Activated naive CD4-positive, alpha-beta T cell treated with anti-CD3 and anti-CD28 coated beads for 36 hours (primary cell): ENCODE measurements at regions of chr12 and their contacts with region 1.

Region 1: DNA sequence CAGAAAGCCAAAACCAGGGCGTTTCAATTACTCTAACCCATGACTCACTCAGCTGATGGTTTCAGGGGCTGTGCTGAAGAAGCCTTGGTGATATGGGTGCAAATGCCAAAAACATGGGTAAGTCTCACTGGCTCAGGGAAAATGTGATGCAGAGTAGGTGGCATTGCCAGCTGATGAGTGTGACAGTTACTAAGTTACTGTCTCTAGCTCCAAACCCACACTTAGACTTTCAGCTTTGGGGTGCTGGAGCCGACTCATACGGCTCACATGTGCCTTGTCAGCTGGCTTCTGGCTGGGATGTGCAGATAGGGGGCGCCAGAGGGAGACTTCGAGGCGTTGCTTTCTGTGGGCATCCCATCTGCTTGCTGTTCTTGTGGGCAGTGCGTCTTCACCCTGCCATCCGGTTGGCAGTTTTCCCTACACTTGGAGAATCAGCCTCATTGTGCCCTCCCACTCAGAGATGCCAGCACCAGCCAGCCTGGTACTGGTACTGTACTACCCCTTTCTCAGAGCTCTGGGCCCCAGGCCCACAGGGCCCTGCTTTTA is 11.1 kb upstream of the KRT7 start:
- DNase-seq: peak; percentile 96
- H3K4me3 Mint-ChIP-seq: no peak overlapping the region
- H3K27ac Mint-ChIP-seq: peak overlapping the region; percentile 14
- H3K4me1 Mint-ChIP-seq: peaks cover 22% of the 10 kb centered on the region
- H3K27me3 Mint-ChIP-seq: peaks cover 25% of the 10 kb centered on the region

Region 2: GRCh38 chr12:50734409-50735263 is 1487.3 kb before region 1 on chr12:
- CTCF ChIA-PET with region 1: no interaction called
- intact Hi-C with region 1: no loop called
- DNase-seq: peak; percentile 30
- H3K4me3 Mint-ChIP-seq: no peak overlapping the region
- H3K27ac Mint-ChIP-seq: no peak overlapping the region
- H3K4me1 Mint-ChIP-seq: no peaks in the 10 kb centered on the region
- H3K27me3 Mint-ChIP-seq: no peaks in the 10 kb centered on the region

Region 3: DNA sequence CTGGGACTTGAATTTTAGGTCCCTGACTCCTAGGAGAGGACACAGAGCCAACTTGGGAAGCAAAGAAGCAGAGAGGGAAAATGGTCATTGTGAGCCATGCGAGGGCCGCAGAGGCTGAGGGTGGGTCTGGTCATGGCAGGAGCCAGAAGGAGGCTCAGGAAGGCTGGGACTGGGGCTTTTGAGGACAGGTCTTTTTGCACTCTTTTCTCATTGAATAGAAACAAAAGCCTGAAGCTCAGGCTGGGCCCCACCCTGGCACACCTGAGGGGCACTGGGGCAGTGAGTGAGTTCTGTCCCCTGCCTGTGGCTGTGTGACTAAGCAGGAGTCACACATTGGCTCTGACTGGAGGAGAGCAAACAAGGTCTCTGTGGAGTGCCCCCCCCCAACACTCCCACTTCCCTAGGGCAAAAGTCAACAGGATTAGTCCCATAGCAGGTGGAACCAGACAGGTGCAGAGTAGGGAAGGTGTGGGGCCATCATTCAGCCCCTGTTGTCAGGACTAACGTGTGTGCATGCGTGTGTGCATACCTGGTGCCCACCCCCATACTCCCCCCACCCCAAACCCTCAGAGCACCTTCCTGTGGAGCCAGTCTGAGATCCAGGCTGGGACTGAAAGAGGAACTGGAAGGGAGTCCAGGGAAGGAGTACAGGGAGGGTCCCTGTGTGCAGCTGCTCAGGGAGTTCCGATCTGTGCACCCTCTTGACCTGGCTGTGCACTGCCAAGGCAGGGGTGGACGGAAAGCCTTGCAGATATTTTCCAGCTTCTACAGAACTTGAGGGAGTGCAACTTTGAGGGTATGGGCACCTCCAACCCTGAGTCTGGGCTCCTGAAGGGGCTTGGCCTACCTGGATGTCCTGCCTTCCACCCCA is 14.1 kb after region 1 on chr12:
- CTCF ChIA-PET with region 1: interaction called, 20 read pairs
- intact Hi-C with region 1: no loop called
- DNase-seq: no peak
- H3K4me3 Mint-ChIP-seq: no peak overlapping the region
- H3K27ac Mint-ChIP-seq: no peak overlapping the region
- H3K4me1 Mint-ChIP-seq: no peaks in the 10 kb centered on the region
- H3K27me3 Mint-ChIP-seq: peaks cover 30% of the 10 kb centered on the region

Region 4: DNA sequence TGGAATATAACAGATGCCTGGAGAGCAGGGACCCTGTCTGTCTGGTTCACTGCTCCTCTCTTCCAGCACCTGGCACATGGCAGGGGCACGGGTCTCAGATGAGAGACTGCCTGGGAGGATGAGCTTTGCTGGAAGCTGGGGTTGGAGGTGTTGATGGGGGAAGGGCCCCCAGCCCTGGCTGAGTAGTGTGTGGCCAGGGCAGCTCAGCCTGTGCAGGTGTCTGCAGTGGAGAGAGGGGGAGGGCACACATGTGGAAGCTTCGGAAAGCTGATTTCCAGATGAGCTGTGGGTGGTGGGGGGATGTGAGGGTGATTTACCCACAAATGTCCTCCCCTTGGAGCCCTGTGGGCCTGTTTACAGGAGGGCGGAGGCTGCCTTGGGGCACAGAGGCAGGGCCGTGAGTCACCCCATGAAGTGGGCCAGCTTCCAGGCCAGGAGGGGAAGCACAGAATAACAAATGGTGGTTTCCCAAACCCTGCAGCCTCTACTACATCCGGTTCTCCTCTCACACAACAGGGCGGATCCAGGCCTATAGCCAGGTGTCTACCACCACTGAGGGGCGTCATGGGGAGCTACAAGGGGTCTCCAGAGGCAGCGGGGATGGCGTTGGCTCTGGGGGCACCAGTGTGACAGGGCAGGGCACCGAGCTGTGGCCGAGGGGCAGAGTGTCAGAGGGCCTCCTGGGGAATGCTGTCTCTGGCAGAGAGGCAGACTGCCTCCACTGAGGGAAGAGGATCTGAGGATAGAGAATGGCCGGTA is 22.1 kb after region 1 on chr12:
- CTCF ChIA-PET with region 1: interaction called, 20 read pairs
- intact Hi-C with region 1: loop called (anchors 1 kb)
- DNase-seq: peak; percentile 94
- H3K4me3 Mint-ChIP-seq: peak overlapping the region; percentile 71
- H3K27ac Mint-ChIP-seq: peak overlapping the region; percentile 73
- H3K4me1 Mint-ChIP-seq: peaks cover 15% of the 10 kb centered on the region
- H3K27me3 Mint-ChIP-seq: peaks cover 6% of the 10 kb centered on the region